SK-N-SH (cell line): ENCODE measurements at regions of chr1 and their contacts with region 1.

Region 1: GRCh38 chr1:181424786-181425403 is 58.4 kb upstream of the CACNA1E start:
- DNase-seq: peak; percentile 79
- H3K4me3 ChIP-seq: peak overlapping the region; percentile 23 to 54
- H3K27ac ChIP-seq: no peak overlapping the region
- H3K4me1 ChIP-seq: peaks cover 0 to 5% of the 10 kb centered on the region in 2 experiments; a peak in 1 of 4 replicates
- H3K27me3 ChIP-seq: no peaks in the 10 kb centered on the region
- CTCF ChIP-seq: peak; percentile 99
- EP300 ChIP-seq: no peak
- RAD21 ChIP-seq: peak; percentile 86

Region 2: GRCh38 chr1:181206513-181206912 is 218.4 kb before region 1 on chr1:
- CTCF ChIA-PET with region 1: interaction called, 13 read pairs
- POLR2A ChIA-PET with region 1: no interaction called
- DNase-seq: no peak
- H3K4me3 ChIP-seq: no peak overlapping the region
- H3K27ac ChIP-seq: no peak overlapping the region
- H3K4me1 ChIP-seq: no peaks in the 10 kb centered on the region
- H3K27me3 ChIP-seq: peaks cover 17% of the 10 kb centered on the region; the same call in 1 of the 2 replicates
- CTCF ChIP-seq: no peak
- EP300 ChIP-seq: no peak
- RAD21 ChIP-seq: no peak

Region 3: DNA sequence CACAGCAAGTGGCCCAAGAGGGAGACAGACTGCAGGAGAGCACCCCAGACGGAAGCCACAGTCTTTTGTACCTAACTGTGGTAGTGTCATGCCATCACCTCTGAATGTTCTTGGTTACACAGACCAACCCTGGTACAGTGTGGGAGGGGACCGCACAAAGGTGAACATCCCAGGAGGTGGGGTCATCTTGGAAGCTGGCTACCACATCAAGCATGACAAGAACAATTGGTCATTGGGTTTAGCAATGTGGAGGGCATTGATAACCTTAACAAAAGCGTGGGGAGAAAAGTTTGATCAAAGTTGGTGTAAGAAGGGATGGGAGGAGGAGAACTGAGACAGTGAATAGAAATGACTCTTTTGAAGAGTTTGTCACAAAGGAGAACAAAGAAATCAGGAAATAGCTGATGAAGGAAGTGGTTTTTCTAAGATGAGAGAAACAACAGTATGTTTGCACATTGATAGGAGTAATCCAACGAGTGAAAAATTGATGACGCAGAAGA is 28.7 kb before region 1 on chr1:
- CTCF ChIA-PET with region 1: interaction called, 13 read pairs
- POLR2A ChIA-PET with region 1: no interaction called
- DNase-seq: no peak
- H3K4me3 ChIP-seq: no peak overlapping the region
- H3K27ac ChIP-seq: no peak overlapping the region
- H3K4me1 ChIP-seq: no peaks in the 10 kb centered on the region
- H3K27me3 ChIP-seq: no peaks in the 10 kb centered on the region
- CTCF ChIP-seq: no peak
- EP300 ChIP-seq: no peak
- RAD21 ChIP-seq: no peak